PC-9 (cell line): ENCODE measurements at regions of chr12 and their contacts with region 1.

Region 1: GRCh38 chr12:21683115-21683514 is 25.5 kb upstream of the LDHB start:
- DNase-seq: no peak
- H3K4me3 ChIP-seq: no peak overlapping the region
- H3K27ac ChIP-seq: no peak overlapping the region
- H3K4me1 ChIP-seq: no peaks in the 10 kb centered on the region
- H3K27me3 ChIP-seq: no peaks in the 10 kb centered on the region
- CTCF ChIP-seq: no peak

Region 2: GRCh38 chr12:21308785-21309184 is 374.3 kb before region 1 on chr12:
- CTCF ChIA-PET with region 1: no interaction called
- POLR2A ChIA-PET with region 1: no interaction called
- intact Hi-C with region 1: loop called (anchors 5 kb)
- DNase-seq: no peak
- H3K4me3 ChIP-seq: no peak overlapping the region
- H3K27ac ChIP-seq: no peak overlapping the region
- H3K4me1 ChIP-seq: no peaks in the 10 kb centered on the region
- H3K27me3 ChIP-seq: no peaks in the 10 kb centered on the region
- CTCF ChIP-seq: no peak